ENCODE measurements at regions of chr2 and their contacts with region 1.

Region 1: GRCh38 chr2:38720613-38721241 is 30.4 kb downstream of the SRSF7 start:
- DNase-seq: no peak
- H3K4me3 Mint-ChIP-seq: peak overlapping the region; percentile 56
- H3K27ac Mint-ChIP-seq: peak overlapping the region; percentile 60
- H3K4me1 Mint-ChIP-seq: peaks cover 46% of the 10 kb centered on the region
- H3K27me3 Mint-ChIP-seq: no peaks in the 10 kb centered on the region

Region 2: DNA sequence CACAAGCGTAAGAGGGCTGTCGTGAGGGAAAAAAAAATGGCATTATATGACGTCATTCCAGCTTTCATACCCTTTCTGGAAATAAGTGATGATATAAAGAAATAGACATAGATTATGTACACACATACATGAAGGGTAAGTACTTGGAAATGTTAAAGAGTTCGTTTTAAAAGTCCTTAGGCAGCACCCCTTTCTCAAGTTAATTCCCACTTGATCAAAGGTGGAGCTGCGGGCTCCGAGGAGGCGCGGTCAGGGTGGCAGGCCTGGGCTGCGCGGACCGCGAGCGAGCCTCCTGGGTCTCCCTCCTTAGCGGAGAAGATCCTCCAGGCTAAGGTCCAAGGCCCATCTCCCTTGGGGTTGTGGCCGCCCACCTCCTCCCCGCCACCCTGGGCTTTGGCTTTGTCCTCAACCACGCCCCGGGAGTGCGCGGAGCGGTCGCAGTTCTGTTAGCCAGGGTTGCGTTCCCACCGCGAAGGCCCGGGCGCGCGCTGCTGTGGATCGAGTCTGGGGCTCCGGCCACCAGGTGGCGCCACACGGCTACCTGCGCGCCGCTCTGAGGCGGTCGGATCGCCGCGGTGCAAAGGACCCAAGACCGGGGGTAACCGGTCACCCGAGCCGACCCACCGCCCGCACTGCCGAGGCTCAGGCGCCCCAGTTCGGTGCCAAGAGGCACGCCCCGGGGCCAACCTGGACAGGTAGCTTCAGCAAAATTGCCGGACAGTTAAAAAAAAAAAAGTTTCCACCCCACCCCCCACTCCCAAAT is 184.8 kb before region 1 on chr2:
- intact Hi-C with region 1: loop called (anchors 10 kb)
- DNase-seq: peak; percentile 95
- H3K4me3 Mint-ChIP-seq: peak overlapping the region; percentile 71
- H3K27ac Mint-ChIP-seq: no peak overlapping the region
- H3K4me1 Mint-ChIP-seq: peaks cover 2% of the 10 kb centered on the region
- H3K27me3 Mint-ChIP-seq: peaks cover 38% of the 10 kb centered on the region

Region 3: GRCh38 chr2:38602732-38603401 is 117.9 kb before region 1 on chr2 and contains the start of gene HNRNPLL:
- intact Hi-C with region 1: loop called (anchors 1 kb)
- DNase-seq: peak; percentile 99
- H3K4me3 Mint-ChIP-seq: peak within 1 kb of the TSS; percentile 97
- H3K27ac Mint-ChIP-seq: peak within 1 kb of the TSS; percentile 94
- H3K4me1 Mint-ChIP-seq: peaks cover 45% of the 10 kb centered on the region
- H3K27me3 Mint-ChIP-seq: no peaks in the 10 kb centered on the region
- total RNA-seq, gene HNRNPLL: 75.8 and 80.3 TPM in 2 replicates

Region 4: DNA sequence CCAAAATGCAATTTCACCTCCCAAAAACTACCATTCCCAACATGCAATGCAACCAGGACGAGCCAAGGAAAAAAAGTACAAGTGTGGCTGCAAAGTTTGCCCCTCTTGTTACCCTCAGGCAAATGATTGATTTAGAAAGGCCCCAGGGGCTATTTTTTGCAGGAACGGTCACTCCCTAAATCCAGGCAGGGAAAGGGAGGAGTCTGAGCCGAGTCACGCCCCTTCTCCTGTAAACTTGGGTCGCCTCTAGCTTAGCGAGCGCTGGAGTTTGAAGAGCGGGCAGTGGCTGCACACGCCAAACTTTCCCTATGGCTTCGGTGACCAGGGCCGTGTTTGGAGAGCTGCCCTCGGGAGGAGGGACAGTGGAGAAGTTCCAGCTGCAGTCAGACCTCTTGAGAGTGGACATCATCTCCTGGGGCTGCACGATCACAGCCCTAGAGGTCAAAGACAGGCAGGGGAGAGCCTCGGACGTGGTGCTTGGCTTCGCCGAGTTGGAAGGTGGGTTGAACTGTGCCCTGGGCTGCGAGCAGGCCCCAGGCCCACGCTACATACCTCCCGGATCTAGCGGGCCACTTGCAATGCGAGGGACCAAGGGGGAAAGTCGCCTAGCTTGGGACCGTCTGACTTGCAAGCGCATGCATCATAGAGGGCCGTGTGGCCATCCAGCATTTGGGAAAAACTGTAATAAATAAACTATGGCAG is 54.7 kb before region 1 on chr2 and contains the start of gene GALM:
- intact Hi-C with region 1: loop called (anchors 1 kb)
- DNase-seq: peak; percentile 88
- H3K4me3 Mint-ChIP-seq: peak within 1 kb of the TSS; percentile 97
- H3K27ac Mint-ChIP-seq: peak within 1 kb of the TSS; percentile 99
- H3K4me1 Mint-ChIP-seq: peaks cover 57% of the 10 kb centered on the region
- H3K27me3 Mint-ChIP-seq: no peaks in the 10 kb centered on the region
- total RNA-seq, gene GALM: 56.0 and 57.4 TPM in 2 replicates

Region 5: DNA sequence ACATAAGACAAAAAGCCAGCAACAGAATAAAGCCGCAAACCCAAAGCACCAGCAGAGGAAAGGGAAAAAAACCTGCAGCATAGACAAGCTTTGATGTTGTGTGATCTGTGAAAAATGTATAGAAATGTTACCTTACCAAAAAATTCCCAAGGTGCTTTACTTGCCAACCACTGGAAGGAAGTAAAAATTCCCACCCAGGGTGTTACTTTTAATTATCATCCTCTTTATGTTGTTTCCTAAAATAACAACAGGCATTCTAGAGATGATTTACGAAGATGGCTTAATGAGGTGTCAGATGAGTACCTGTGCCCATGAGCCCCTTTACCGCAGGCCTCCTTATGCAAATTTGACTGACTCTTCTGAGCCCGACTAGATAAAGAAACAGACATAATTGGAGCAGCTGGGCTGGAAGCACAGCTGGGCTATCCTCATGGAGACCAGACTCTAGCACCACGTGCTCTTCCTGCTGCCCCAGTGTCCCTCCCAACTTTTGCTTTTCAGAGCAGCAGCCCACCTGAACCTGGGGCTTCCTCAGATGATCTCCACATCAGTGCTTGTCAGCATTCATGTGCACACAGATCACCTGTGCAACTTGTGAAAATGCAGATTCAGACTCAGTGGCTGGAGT is 11.0 kb before region 1 on chr2:
- intact Hi-C with region 1: loop called (anchors 2 kb)
- DNase-seq: peak; percentile 82
- H3K4me3 Mint-ChIP-seq: peak overlapping the region; percentile 72
- H3K27ac Mint-ChIP-seq: peak overlapping the region; percentile 86
- H3K4me1 Mint-ChIP-seq: peaks cover 67% of the 10 kb centered on the region
- H3K27me3 Mint-ChIP-seq: no peaks in the 10 kb centered on the region

Region 6: GRCh38 chr2:38797276-38797675 is 76.5 kb after region 1 on chr2:
- intact Hi-C with region 1: no loop called
- DNase-seq: no peak
- H3K4me3 Mint-ChIP-seq: no peak overlapping the region
- H3K27ac Mint-ChIP-seq: no peak overlapping the region
- H3K4me1 Mint-ChIP-seq: no peaks in the 10 kb centered on the region
- H3K27me3 Mint-ChIP-seq: no peaks in the 10 kb centered on the region